ENCODE measurements at regions of chr9 and their contacts with region 1.

Region 1: GRCh38 chr9:72280913-72281500 is 84.0 kb downstream of the ZFAND5 start:
- DNase-seq: peak; percentile 79
- H3K4me3 Mint-ChIP-seq: no peak overlapping the region
- H3K27ac Mint-ChIP-seq: no peak overlapping the region
- H3K4me1 Mint-ChIP-seq: no peaks in the 10 kb centered on the region
- H3K27me3 Mint-ChIP-seq: no peaks in the 10 kb centered on the region

Region 2: DNA sequence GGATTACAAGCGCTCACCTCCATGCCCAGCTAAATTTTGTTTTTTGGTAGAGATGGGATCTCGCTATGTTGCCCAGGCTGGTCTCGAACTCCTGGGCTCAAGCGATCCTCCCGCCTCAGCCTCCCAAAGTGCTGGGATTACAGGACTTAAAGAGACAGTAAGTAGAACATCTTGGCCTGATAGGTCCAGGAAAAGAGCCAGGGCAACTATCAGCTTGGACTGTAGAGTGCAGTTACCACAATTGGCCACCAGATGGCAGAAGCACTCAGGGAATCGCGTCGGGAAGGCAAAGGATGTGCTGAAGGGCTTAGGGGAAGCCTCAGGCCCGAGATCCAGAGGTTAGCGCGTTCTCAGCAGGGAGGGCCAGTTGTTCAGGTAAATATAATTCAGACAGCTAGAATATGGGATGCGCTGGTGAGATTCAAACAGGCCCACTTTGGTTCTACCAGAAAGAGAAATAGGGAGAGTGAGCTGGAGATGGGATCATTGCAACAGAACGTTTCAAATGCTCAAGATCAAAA is 242.1 kb before region 1 on chr9:
- CTCF ChIA-PET with region 1: interaction called, 38 read pairs
- intact Hi-C with region 1: no loop called
- DNase-seq: peak; percentile 80
- H3K4me3 Mint-ChIP-seq: no peak overlapping the region
- H3K27ac Mint-ChIP-seq: no peak overlapping the region
- H3K4me1 Mint-ChIP-seq: peaks cover 4% of the 10 kb centered on the region
- H3K27me3 Mint-ChIP-seq: peaks cover 6% of the 10 kb centered on the region

Region 3: DNA sequence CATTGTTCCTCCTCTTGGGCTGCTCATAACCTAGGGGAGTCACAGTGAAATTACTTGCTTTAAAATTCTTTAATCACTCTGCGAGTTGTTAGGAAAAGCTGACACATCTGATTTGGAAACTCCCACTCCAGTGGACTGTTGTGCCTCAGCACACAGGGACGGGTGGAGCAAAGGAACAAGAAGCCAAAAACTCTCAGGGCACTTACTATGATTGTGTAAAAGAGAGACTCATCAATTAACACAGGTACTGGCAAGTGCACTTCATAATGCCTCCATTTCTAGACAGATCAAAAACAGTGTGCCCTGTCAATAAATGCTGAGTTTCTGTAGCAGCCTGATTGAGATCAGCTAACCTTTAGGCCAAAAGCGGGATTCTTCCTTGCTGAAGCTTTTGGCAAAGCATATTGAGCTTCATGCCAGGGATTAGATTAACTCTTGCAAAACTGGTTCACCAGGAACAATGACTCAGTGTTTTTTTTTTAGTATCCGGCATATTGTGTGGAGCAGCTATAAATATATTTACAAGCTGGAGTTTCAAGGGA is 296.3 kb after region 1 on chr9:
- CTCF ChIA-PET with region 1: interaction called, 15 read pairs
- intact Hi-C with region 1: no loop called
- DNase-seq: no peak
- H3K4me3 Mint-ChIP-seq: no peak overlapping the region
- H3K27ac Mint-ChIP-seq: no peak overlapping the region
- H3K4me1 Mint-ChIP-seq: peaks cover 6% of the 10 kb centered on the region
- H3K27me3 Mint-ChIP-seq: peaks cover 4% of the 10 kb centered on the region

Region 4: DNA sequence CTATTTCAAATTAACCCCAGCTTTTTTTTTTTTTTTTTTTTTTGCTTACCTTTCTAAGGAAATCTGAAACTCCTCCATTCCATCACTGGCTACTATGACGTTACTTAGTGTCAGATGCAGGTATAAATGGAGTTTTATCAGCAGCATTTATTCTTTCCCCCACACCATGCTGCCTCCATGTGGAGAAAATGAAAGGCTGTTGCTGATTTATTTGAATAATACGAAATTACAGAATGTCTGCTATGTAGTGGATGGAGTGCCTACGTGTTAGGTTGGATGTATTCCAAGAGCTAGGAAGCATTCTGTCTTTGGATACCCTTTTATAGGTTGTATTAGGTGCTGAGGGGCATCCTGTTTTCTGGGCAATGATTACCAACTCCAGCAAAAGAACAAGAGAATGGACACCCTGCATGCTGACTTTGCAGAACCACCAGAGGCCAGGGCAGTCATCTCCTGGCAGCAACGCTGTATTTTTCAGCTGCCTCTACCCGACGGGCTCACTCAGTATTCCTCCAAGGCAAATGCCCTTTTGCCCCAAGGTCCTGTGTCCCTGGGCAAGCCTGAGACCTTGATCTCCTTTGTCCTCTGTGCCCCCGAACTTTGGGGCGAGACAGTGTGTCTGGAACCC is 472.4 kb after region 1 on chr9:
- CTCF ChIA-PET with region 1: no interaction called
- intact Hi-C with region 1: loop called (anchors 1 kb)
- DNase-seq: no peak
- H3K4me3 Mint-ChIP-seq: no peak overlapping the region
- H3K27ac Mint-ChIP-seq: no peak overlapping the region
- H3K4me1 Mint-ChIP-seq: no peaks in the 10 kb centered on the region
- H3K27me3 Mint-ChIP-seq: peaks cover 10% of the 10 kb centered on the region

Region 5: GRCh38 chr9:73023025-73023541 is 742.1 kb after region 1 on chr9:
- CTCF ChIA-PET with region 1: interaction called, 8 read pairs
- intact Hi-C with region 1: loop called (anchors 1 kb)
- DNase-seq: peak; percentile 68
- H3K4me3 Mint-ChIP-seq: no peak overlapping the region
- H3K27ac Mint-ChIP-seq: no peak overlapping the region
- H3K4me1 Mint-ChIP-seq: peaks cover 6% of the 10 kb centered on the region
- H3K27me3 Mint-ChIP-seq: peaks cover 15% of the 10 kb centered on the region

Region 6: GRCh38 chr9:73183917-73184861 is 903.2 kb after region 1 on chr9:
- CTCF ChIA-PET with region 1: no interaction called
- intact Hi-C with region 1: loop called (anchors 10 kb)
- DNase-seq: no peak
- H3K4me3 Mint-ChIP-seq: no peak overlapping the region
- H3K27ac Mint-ChIP-seq: no peak overlapping the region
- H3K4me1 Mint-ChIP-seq: peaks cover 6% of the 10 kb centered on the region
- H3K27me3 Mint-ChIP-seq: peaks cover 2% of the 10 kb centered on the region

Measured in activated naive CD4-positive, alpha-beta T cell treated with anti-CD3 and anti-CD28 coated beads for 36 hours (primary cell).